Cardiac septum (tissue), 1 donor: ENCODE measurements at regions of chr17 and their contacts with region 1.

Region 1: GRCh38 chr17:63478791-63479494 is 2.1 kb downstream of the ACE start:
- DNase-seq: peak; percentile 88

Region 2: DNA sequence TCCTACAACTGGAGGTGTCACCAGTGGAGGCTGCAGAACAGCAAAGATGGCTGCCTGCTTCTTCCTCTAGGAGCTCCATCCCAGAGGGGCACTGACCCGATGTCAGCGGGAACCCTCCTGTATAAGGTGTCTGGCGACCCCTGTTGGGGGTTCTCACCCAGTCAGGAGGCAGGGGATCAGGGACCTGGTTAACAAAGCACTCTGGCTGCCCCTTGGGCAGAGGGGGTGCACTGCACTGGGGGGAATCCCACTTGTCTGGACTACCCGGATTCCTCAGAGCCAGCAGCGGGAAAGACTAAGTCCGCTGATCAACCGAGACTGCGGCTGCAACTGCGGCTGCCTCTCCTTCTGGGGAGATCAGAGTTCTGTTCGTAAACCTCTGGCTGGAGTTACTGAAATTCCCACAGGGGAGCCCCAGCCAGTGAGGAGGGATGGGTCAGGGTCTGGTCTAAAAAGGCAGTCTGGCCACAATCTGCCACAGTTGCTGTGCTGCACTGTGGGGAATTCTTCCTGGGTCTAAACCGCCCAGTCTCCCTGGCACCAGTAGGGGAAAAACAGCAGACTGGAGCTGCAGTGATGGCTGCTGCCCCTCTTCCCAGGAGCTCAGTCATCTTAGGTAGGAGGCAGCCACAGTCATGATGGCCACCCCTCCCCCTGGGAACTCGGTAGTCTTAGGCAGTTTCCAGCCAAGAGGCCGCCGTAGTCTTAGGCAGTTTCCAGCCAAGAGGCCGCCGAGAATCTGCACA is 246.2 kb before region 1 on chr17:
- intact Hi-C with region 1: no loop called
- DNase-seq: no peak

Region 3: DNA sequence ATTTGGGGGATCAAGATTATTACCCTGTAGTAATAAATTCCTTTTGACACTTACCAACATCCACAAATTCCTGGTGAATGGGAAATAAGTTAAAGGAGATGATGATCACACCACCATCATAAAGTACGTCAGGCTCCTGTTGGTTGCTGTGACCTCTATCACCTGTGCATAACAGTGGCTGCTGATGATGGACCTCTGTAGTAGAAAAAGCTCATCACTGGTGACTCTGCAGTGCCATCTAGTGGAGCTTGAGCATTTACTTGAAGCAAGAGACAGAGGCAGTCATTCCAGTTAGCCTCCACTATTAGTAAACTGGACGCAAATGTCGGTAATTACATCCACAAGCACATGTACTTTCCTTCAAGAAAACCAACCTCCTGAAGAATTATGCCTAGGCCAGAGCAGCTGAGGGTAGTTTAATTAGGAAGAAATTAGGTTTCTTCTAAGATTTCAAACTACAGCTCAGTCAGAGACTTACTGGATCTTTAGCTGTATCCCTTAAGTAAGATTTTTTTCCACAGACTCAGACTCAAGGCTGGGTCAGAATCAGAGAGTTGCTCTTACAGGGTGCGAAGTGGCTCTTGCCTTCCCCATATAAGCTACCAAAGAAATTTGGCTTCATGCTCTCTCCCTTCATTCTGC is 72.1 kb before region 1 on chr17:
- intact Hi-C with region 1: no loop called
- DNase-seq: no peak

Region 4: GRCh38 chr17:63425482-63425881 is 53.5 kb before region 1 on chr17:
- intact Hi-C with region 1: loop called (anchors 1 kb)
- DNase-seq: no peak

Region 5: DNA sequence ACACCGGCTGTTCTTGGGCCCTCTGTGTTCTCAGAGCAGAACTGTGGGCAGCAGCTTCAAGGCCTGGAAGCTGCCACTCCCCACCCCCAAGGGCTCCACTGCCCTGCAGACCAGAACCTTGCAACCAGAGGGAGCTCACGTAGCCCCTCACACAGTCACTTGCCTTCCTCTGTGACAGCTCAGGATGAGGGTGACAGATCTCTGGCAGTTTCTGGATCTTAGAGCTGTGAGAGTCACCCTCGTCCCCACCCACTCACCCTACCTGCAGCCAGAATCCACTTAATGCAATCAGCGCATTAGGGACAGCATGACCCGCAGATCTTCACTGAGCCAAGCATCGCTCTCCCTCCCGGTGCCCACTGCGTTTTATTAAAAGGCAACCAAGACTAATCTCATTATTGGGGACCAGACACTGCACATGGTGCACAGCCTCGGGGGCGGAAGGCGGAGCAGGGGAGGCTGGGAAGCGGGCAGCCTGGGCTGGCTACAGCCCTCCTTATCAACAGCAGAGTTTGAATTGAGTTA is 36.4 kb before region 1 on chr17:
- intact Hi-C with region 1: loop called (anchors 2 kb)
- DNase-seq: no peak

Region 6: GRCh38 chr17:63611354-63611753 is 132.4 kb after region 1 on chr17:
- intact Hi-C with region 1: loop called (anchors 5 kb)
- DNase-seq: no peak